H1 (cell line): ENCODE measurements at regions of chr16 and their contacts with region 1.

Region 1: DNA sequence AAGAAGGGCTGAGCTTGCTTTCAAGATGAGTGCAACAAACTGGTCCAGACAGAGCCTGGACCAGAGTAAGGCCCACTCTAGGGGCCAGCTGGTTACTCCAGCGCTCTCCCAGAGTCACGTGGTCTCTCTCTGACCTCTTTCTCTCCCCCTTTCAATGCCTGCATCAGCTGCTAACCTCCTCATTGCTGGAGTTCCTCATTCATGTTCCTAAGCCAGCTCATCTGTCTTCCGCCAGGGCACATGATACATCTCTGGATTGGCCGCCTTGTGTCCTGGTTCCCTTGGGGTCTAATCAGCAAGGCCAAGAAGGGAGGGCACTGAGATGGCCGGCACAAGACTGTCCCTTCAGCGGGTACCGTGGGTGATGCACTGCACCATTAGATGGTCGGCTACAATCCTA is 26.9 kb upstream of the ZFP90 start:
- DNase-seq: no peak
- H3K4me3 ChIP-seq: no peak overlapping the region
- H3K27ac ChIP-seq: no peak overlapping the region
- H3K4me1 ChIP-seq: no peaks in the 10 kb centered on the region
- H3K27me3 ChIP-seq: peaks cover 0 to 3% (median 0%) of the 10 kb centered on the region in 4 experiments; a peak in 2 of 7 replicates
- CTCF ChIP-seq: no peak
- EP300 ChIP-seq: no peak
- POLR2A ChIP-seq: no peak
- RAD21 ChIP-seq: no peak

Region 2: DNA sequence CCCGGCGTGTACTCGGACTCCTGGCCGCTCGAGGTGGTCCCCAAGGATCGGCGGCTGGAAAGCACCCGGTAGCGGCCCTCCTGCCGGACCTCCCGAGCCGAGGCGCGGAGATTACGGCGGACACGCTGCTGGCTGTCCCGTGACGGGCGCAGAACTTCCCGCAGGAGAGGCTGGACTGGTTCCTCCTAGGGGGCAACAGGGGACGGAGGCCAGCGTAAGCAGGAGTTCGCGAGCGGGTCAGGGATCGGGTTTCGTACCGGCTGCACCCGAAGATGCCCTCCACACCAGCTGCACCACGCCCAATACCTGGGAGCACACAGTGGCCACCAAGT is 201.8 kb before region 1 on chr16:
- CTCF ChIA-PET with region 1: no interaction called
- POLR2A ChIA-PET with region 1: no interaction called
- DNase-seq: no peak
- H3K4me3 ChIP-seq: peak overlapping the region; percentile 69 to 96 (median 86)
- H3K27ac ChIP-seq: peak overlapping the region; percentile 87
- H3K4me1 ChIP-seq: peaks cover 3 to 6% (median 4%) of the 10 kb centered on the region in 4 experiments; a peak in 5 of 7 replicates
- H3K27me3 ChIP-seq: no peaks in the 10 kb centered on the region
- CTCF ChIP-seq: no peak
- EP300 ChIP-seq: no peak
- POLR2A ChIP-seq: no peak
- RAD21 ChIP-seq: no peak

Region 3: DNA sequence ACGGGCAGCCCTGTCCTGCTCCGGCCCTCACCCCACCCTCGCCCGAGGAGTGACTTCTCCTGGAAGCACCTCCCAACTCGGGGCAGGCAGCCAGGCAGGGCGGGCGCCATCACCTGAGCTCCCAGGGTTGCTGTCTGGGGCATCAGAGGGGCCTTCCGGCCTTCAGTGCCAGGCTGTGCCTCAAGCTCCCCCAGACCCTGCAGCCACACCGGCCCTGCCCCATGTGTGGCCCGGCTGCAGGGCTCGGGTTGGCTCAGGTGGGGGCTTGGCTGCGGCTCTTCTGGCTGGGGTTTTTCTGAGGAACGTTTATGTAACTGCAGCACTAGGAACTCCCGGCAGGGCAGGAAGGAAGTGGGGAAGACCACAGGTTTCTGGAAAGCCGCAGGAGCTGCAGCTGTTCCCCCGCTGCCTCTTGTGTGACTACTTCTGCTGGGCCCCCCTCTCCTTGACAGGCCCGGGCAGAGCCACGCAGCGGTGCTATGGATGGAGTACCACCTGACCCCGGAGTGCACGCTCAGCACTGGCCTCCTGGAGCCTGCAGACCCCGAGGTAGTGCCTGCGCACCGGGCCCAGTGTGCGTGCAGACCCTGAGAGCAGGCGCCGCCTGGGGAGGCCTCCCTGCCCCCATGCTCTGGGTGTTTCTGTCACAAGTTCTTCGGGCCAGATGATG is 155.8 kb before region 1 on chr16:
- CTCF ChIA-PET with region 1: interaction called, 136 read pairs
- POLR2A ChIA-PET with region 1: no interaction called
- DNase-seq: no peak
- H3K4me3 ChIP-seq: no peak overlapping the region
- H3K27ac ChIP-seq: no peak overlapping the region
- H3K4me1 ChIP-seq: no peaks in the 10 kb centered on the region
- H3K27me3 ChIP-seq: no peaks in the 10 kb centered on the region
- CTCF ChIP-seq: no peak
- EP300 ChIP-seq: no peak
- POLR2A ChIP-seq: no peak
- RAD21 ChIP-seq: no peak

Region 4: DNA sequence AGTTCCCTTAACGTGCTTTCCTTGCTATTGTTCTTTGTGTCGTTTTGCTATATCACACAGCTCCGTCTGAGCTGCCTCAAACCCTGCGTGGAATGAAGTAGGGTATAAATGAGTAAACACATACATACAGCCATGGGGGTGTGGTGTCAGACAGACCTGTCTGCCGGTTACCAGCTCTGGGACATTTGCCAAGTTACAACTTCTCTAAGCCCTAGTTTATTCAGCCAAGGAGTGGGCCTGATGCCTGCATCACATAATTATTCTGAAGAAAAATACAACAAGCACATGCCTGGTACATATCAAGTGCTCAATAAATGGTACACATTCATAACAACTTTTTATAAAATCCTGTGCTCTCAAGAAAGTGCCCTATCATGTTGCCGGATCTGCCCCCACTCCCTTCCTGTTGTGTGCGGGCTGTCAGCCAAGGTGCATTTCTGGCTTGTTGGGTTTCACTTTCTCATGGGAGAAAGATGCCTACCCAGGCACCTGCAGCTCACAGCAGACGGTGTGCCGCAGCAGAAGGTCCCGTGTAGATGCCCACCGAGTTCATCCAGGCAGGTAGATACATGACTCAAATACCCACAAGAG is 94.4 kb before region 1 on chr16:
- CTCF ChIA-PET with region 1: interaction called, 13 read pairs
- POLR2A ChIA-PET with region 1: no interaction called
- DNase-seq: no peak
- H3K4me3 ChIP-seq: no peak overlapping the region
- H3K27ac ChIP-seq: no peak overlapping the region
- H3K4me1 ChIP-seq: peaks cover 0 to 5% (median 1%) of the 10 kb centered on the region in 4 experiments; a peak in 2 of 7 replicates
- H3K27me3 ChIP-seq: no peaks in the 10 kb centered on the region; a peak in 1 of 7 replicates
- CTCF ChIP-seq: no peak
- EP300 ChIP-seq: no peak
- POLR2A ChIP-seq: no peak
- RAD21 ChIP-seq: no peak

Region 5: DNA sequence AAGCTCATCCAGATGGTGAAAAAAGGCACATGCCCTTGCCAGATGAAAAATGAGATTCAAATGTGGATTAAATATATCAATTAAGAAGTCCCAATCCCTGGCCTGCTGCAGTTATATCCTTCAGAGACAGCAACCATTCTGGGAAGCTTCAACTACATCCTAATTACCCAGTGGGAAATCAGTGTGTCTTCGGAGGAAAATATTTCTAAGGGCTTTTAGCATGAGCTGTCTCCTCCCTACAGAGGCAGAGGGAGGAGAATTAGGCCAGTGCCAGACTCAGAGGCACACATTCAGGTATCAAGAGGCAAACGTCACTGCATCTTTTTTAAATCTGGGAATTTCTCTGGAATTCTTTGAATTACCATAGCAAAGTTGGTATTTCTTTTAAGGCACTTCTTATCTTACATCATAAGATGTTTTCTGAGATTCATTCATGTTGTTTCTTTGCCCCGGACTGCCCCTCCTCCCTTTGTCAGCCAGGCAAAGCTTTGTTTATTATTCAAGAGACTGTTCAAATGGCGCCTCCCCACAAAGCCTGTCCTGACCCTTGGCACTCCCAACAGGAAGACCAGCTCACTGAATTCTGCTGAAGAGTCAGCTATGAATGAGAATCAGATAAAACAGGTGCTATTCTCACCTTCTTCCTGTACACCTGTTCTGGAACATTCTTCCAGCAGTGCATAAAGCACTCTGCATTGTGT is 25.5 kb before region 1 on chr16:
- CTCF ChIA-PET with region 1: interaction called, 34 read pairs
- POLR2A ChIA-PET with region 1: interaction called, 3 read pairs
- DNase-seq: no peak
- H3K4me3 ChIP-seq: no peak overlapping the region
- H3K27ac ChIP-seq: no peak overlapping the region
- H3K4me1 ChIP-seq: peaks cover 6 to 14% (median 10%) of the 10 kb centered on the region in 4 experiments
- H3K27me3 ChIP-seq: no peaks in the 10 kb centered on the region
- CTCF ChIP-seq: no peak
- EP300 ChIP-seq: no peak
- POLR2A ChIP-seq: no peak
- RAD21 ChIP-seq: no peak

Region 6: GRCh38 chr16:68499006-68499405 is 13.2 kb before region 1 on chr16:
- CTCF ChIA-PET with region 1: interaction called, 22 read pairs
- POLR2A ChIA-PET with region 1: no interaction called
- DNase-seq: no peak
- H3K4me3 ChIP-seq: no peak overlapping the region
- H3K27ac ChIP-seq: no peak overlapping the region
- H3K4me1 ChIP-seq: no peaks in the 10 kb centered on the region
- H3K27me3 ChIP-seq: 0 out of 7 replicates have a peak, but pooled peaks cover 0 to 2% (median 0%) of the 10 kb centered on the region in 4 experiments
- CTCF ChIP-seq: no peak
- EP300 ChIP-seq: no peak
- POLR2A ChIP-seq: no peak
- RAD21 ChIP-seq: no peak

Region 7: DNA sequence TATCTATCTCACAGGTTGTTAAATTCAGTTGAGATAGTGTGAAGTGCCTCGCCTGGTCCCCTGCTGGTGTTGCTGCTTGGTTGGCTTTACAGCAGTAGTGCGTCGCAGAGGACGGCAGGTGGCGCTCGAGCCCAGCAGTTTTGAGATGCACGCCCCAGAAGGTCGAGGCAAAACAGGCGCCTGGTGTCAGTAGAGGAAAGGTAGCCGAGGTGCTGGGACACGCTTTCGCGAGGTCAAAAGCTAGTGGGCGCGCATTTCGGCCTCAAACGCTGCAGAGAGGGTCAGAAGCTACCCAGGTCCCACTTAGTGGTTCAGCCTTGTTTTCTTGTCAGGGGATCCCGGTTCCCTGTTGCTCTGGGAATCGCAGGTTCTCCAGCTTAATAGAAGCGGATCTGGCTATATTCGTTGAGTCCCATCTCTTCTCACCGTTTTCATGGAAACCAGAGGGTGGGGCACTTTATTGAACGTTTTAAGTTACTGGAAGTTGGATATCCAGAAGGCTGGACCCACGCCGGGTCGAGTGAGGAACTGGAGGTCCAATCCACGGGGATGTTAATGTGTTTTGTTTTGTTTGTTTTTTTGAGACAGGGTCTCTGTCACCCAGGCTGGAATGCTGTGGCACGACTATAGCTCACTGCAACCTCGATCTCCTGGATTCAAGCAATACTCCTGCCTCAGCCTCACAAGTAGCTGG is 16.6 kb after region 1 on chr16:
- CTCF ChIA-PET with region 1: interaction called, 21 read pairs
- POLR2A ChIA-PET with region 1: no interaction called
- DNase-seq: peak; percentile 74 to 94
- H3K4me3 ChIP-seq: peak overlapping the region in 1 of 4 experiments; percentile 8; a peak in 1 of 8 replicates
- H3K27ac ChIP-seq: no peak overlapping the region
- H3K4me1 ChIP-seq: peaks cover 0 to 3% (median 3%) of the 10 kb centered on the region in 4 experiments; a peak in 4 of 7 replicates
- H3K27me3 ChIP-seq: peaks cover 4 to 21% (median 15%) of the 10 kb centered on the region in 4 experiments
- CTCF ChIP-seq: peak; percentile 94 to 99 (median 98)
- EP300 ChIP-seq: no peak
- POLR2A ChIP-seq: no peak
- RAD21 ChIP-seq: peak; percentile 97